ENCODE measurements at regions of chr10 and their contacts with region 1.

Region 1: GRCh38 chr10:35212856-35213255 is 86.2 kb downstream of the CREM start:
- DNase-seq: no peak
- CTCF ChIP-seq: no peak

Region 2: GRCh38 chr10:34681933-34682332 is 530.9 kb before region 1 on chr10:
- in situ Hi-C with region 1: no loop called
- DNase-seq: no peak
- CTCF ChIP-seq: no peak

Region 3: GRCh38 chr10:35126530-35127296 is 86.1 kb before region 1 on chr10 and contains the start of gene CREM:
- in situ Hi-C with region 1: loop called (anchors 5 kb)
- DNase-seq: peak; percentile 98
- CTCF ChIP-seq: peak; percentile 70